ENCODE measurements at regions of chr7 and their contacts with region 1.

Region 1: GRCh38 chr7:55265836-55266642 is 99.1 kb upstream of the LANCL2 start:
- DNase-seq: no peak

Region 2: GRCh38 chr7:54773472-54774399 is 492.3 kb before region 1 on chr7:
- in situ Hi-C with region 1: loop called (anchors 10 kb)
- DNase-seq: peak; percentile 95

Region 3: GRCh38 chr7:55073945-55074499 is 192.0 kb before region 1 on chr7:
- in situ Hi-C with region 1: no loop called
- DNase-seq: peak; percentile 99

Region 4: GRCh38 chr7:55457801-55458200 is 191.8 kb after region 1 on chr7:
- in situ Hi-C with region 1: no loop called
- DNase-seq: no peak

Region 5: DNA sequence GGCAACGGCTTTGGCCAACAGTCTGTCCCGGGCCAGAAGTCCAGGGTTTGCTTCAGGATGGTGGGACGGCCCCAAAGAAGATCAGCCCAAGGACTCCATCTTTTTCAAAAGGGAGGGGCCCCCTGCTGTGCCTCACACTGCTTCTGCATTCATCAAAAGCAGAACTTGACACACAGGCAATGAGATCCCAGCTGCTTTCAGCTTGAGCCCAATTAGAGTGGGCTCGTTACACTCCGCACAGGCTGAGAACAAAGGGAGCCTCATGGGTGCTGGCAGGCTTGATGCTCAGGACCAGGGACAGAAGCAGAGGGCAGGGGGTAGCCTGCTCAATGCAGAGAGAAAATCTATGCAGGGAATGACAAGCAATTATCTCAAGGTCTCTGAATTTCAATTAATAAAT is 260.7 kb after region 1 on chr7:
- in situ Hi-C with region 1: no loop called
- DNase-seq: no peak

Region 6: DNA sequence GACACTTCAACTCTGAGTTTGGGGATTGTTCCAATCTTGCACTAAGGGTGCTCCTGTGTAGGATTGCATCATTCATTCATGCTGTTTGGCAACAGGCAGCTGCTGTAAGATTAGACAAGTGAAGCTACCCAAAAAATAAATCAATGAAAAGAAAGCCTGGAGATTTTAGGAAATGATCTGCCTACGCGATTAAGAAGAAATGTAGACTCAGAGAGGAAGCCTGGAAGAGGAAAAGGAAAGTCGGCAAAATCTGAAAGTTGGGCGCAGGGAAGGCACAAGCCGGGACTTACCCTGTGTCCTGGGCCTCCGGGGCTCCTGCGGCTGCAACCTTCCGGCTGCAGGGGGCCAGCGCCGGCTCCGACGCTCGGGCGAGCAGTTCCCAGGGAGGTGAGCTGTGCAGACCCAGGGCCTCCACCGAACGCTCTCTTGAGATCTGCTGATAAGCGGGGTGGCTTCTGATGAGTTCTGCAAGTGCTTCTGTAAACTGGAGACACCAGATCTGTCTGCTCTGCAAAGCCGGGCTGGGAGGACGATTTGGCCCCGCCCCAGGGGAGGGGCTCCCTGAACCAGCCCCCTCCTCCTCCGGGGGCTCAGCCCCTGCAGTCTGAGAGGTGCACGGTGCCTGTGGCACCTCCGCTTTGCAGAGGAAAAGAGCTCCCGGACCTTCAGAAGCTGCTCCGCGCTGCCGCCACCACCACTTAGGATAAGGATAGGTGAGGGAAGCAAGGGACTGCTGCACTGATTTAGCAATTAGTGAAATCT is 767.8 kb after region 1 on chr7:
- in situ Hi-C with region 1: no loop called
- DNase-seq: peak; percentile 90